ENCODE measurements at regions of chr6 and their contacts with region 1.

Region 1: DNA sequence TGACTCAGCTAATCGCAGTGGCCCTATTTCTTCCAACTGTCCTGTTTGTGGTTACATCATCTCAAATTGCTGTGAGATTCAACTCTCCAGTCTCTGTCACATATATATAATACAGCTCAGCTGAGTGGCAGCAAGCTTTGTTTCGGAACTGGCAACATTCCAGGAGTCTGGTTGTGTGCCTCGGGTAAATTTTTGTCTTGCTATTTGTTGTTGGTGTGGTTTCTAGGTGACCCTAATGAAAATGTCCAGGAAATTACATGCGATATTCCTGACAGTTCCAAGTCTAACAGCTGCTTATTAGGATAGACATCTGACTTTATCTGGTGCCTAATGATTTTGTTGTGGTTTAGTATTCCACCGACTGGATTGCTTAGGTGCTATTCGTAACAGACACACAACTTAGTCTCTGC is 581.8 kb downstream of the CD109 start:
- DNase-seq: peak; percentile 17
- ATAC-seq: peak; percentile 21
- H3K4me3 ChIP-seq: no peak overlapping the region
- H3K27ac ChIP-seq: peak overlapping the region; percentile 58; the same call in 1 of the 2 replicates
- H3K4me1 ChIP-seq: peaks cover 2% of the 10 kb centered on the region; the same call in 1 of the 2 replicates
- H3K27me3 ChIP-seq: no peaks in the 10 kb centered on the region
- CTCF ChIP-seq: no peak
- POLR2A ChIP-seq: no peak
- RAD21 ChIP-seq: no peak

Region 2: DNA sequence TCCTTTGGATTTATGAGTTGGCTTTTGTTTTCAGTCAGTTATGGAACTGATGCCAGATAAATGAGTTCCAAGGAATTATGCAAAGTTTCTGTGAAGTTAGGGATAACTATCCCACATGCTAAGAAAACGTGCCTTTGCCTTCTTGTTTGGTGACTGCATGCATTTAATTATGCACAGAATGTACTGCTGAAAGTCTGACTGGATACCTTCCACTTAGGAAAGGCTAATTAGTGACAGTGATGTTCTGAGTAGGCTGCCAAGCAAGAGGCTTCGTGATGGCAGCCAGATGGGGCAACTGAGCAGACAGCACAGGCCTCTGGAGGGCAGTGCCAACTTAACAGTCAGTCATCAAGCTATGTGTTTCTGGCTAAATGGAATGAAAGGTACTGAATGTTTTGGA is 291.9 kb before region 1 on chr6:
- CTCF ChIA-PET with region 1: no interaction called
- POLR2A ChIA-PET with region 1: no interaction called
- dilution Hi-C with region 1: no loop called
- in situ Hi-C with region 1: no loop called
- intact Hi-C with region 1: no loop called
- DNase-seq: no peak
- ATAC-seq: peak; percentile 19; the same call in 1 of the 2 replicates
- H3K4me3 ChIP-seq: no peak overlapping the region
- H3K27ac ChIP-seq: no peak overlapping the region
- H3K4me1 ChIP-seq: peaks cover 10% of the 10 kb centered on the region
- H3K27me3 ChIP-seq: no peaks in the 10 kb centered on the region
- CTCF ChIP-seq: no peak; the same call in 1 of the 2 replicates
- POLR2A ChIP-seq: no peak
- RAD21 ChIP-seq: no peak

Region 3: GRCh38 chr6:74115674-74116073 is 162.1 kb before region 1 on chr6:
- CTCF ChIA-PET with region 1: interaction called, 3 read pairs
- POLR2A ChIA-PET with region 1: no interaction called
- dilution Hi-C with region 1: no loop called
- in situ Hi-C with region 1: no loop called
- intact Hi-C with region 1: loop called (anchors 5 kb)
- DNase-seq: peak; percentile 38
- ATAC-seq: no peak
- H3K4me3 ChIP-seq: no peak overlapping the region
- H3K27ac ChIP-seq: no peak overlapping the region
- H3K4me1 ChIP-seq: peaks cover 23% of the 10 kb centered on the region
- H3K27me3 ChIP-seq: no peaks in the 10 kb centered on the region
- CTCF ChIP-seq: no peak
- POLR2A ChIP-seq: no peak
- RAD21 ChIP-seq: no peak

Region 4: GRCh38 chr6:74170118-74170517 is 107.7 kb before region 1 on chr6:
- CTCF ChIA-PET with region 1: interaction called, 3 read pairs
- POLR2A ChIA-PET with region 1: no interaction called
- dilution Hi-C with region 1: no loop called
- in situ Hi-C with region 1: no loop called
- intact Hi-C with region 1: loop called (anchors 2 kb)
- DNase-seq: peak; percentile 99
- ATAC-seq: peak; percentile 92
- H3K4me3 ChIP-seq: no peak overlapping the region
- H3K27ac ChIP-seq: peak overlapping the region; percentile 99; the same call in 1 of the 2 replicates
- H3K4me1 ChIP-seq: peaks cover 8% of the 10 kb centered on the region; the same call in 1 of the 2 replicates
- H3K27me3 ChIP-seq: no peaks in the 10 kb centered on the region
- CTCF ChIP-seq: no peak
- POLR2A ChIP-seq: no peak
- RAD21 ChIP-seq: no peak